ENCODE measurements at regions of chr5 and their contacts with region 1.

Region 1: GRCh38 chr5:68187268-68188055 is 28.1 kb upstream of the PIK3R1 start:
- DNase-seq: peak; percentile 68
- ATAC-seq: peak; percentile 80
- H3K4me3 Mint-ChIP-seq: peak overlapping the region; percentile 62
- H3K27ac Mint-ChIP-seq: peak overlapping the region; percentile 86
- H3K4me1 Mint-ChIP-seq: peaks cover 48% of the 10 kb centered on the region
- H3K27me3 Mint-ChIP-seq: no peaks in the 10 kb centered on the region
- CTCF ChIP-seq: no peak

Region 2: GRCh38 chr5:68149189-68149588 is 38.3 kb before region 1 on chr5:
- CTCF ChIA-PET with region 1: no interaction called
- POLR2A ChIA-PET with region 1: no interaction called
- DNase-seq: no peak
- ATAC-seq: no peak
- H3K4me3 Mint-ChIP-seq: no peak overlapping the region
- H3K27ac Mint-ChIP-seq: no peak overlapping the region
- H3K4me1 Mint-ChIP-seq: peaks cover 7% of the 10 kb centered on the region
- H3K27me3 Mint-ChIP-seq: no peaks in the 10 kb centered on the region
- CTCF ChIP-seq: no peak

Region 3: DNA sequence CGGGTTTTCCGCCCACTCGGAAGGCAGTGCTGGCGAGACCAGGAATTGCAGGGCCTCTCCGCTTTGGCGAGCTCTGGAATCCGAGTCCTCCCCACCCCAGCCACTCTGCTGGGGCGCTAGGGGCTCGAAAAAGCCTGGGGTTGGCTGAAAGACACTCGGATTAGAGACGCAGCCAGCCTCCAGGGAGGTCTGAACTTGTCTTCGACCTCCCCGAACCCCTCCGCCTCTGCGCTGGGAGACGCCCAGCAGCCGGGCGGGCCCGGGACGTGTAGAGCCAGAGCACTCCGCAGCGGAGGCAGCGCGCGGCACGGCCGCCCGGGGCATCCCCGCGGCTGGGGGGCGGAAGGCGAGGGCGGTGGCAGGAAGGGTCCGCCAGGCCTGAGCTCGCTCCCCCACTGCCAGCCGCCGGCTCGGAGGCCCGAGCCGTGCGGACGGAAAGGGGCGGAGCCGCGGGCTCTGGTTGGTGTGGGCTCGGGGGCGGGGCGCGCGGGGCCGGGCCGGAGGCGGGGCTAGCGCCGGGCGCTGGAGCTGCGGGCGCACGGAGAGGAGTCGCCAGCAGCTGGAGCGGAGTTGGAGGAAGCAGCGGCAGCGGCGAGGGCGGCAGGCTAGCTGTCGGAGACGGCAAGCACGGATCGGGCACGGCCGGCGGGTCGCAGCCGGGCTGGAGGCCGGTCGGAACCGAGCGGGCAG is 27.9 kb after region 1 on chr5 and contains the start of gene PIK3R1:
- CTCF ChIA-PET with region 1: interaction called, 12 read pairs
- POLR2A ChIA-PET with region 1: interaction called, 3 read pairs
- DNase-seq: peak; percentile 93
- ATAC-seq: peak; percentile 89
- H3K4me3 Mint-ChIP-seq: peak within 1 kb of the TSS; percentile 83
- H3K27ac Mint-ChIP-seq: no peak within 1 kb of the TSS
- H3K4me1 Mint-ChIP-seq: peaks cover 22% of the 10 kb centered on the region
- H3K27me3 Mint-ChIP-seq: peaks cover 84% of the 10 kb centered on the region
- CTCF ChIP-seq: no peak
- total RNA-seq, gene PIK3R1: 10.1 to 11.3 TPM (median 11.1 TPM) in 3 replicates